Activated B cell treated with CpG ODN at 0.5 μM for 24 hours (primary cell): ENCODE measurements at regions of chr9 and their contacts with region 1.

Region 1: DNA sequence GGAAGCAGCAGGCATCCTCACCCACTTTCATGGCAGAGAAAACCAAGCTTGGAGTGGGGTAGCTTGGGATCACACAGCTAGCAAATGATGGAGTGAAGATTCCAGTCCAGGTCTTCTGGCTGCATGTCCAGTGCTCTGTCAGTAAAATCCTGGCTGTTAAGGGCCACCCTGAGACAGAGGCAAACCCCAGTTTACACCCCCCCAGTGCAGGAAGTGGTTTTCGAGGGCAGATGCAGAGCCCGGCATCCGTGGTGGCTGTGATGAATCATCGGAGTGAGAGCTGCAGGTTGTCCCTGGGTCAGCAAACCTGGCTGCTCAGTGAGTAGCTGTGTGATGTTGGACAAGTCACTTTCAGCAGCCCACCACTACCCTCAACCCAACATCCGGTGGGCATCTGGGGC is 115.4 kb downstream of the RGS3 start:
- DNase-seq: peak; percentile 68
- ATAC-seq: peak; percentile 48
- H3K4me3 Mint-ChIP-seq: peak overlapping the region; percentile 53
- H3K27ac Mint-ChIP-seq: peak overlapping the region; percentile 94
- H3K4me1 Mint-ChIP-seq: peaks cover 79% of the 10 kb centered on the region
- H3K27me3 Mint-ChIP-seq: no peaks in the 10 kb centered on the region
- CTCF ChIP-seq: no peak

Region 2: GRCh38 chr9:113221003-113221799 is 357.7 kb before region 1 on chr9 and contains the starts of genes FKBP15 and SLC31A1:
- CTCF ChIA-PET with region 1: interaction called, 3 read pairs
- POLR2A ChIA-PET with region 1: no interaction called
- intact Hi-C with region 1: loop called (anchors 1 kb)
- DNase-seq: peak; percentile 94
- ATAC-seq: peak; percentile 95
- H3K4me3 Mint-ChIP-seq: peak within 1 kb of the TSS; percentile 96
- H3K27ac Mint-ChIP-seq: peak within 1 kb of the TSS; percentile 94
- H3K4me1 Mint-ChIP-seq: peaks cover 49% of the 10 kb centered on the region
- H3K27me3 Mint-ChIP-seq: no peaks in the 10 kb centered on the region
- CTCF ChIP-seq: no peak
- total RNA-seq, gene FKBP15: 48.3 and 49.1 TPM in 2 replicates
- total RNA-seq, gene SLC31A1: 5.7 and 7.3 TPM in 2 replicates

Region 3: GRCh38 chr9:113376634-113377567 is 202.0 kb before region 1 on chr9 and contains the start of gene HDHD3:
- CTCF ChIA-PET with region 1: no interaction called
- POLR2A ChIA-PET with region 1: interaction called, 7 read pairs
- intact Hi-C with region 1: loop called (anchors 1 kb)
- DNase-seq: peak; percentile 78
- ATAC-seq: peak; percentile 90
- H3K4me3 Mint-ChIP-seq: peak within 1 kb of the TSS; percentile 92
- H3K27ac Mint-ChIP-seq: peak within 1 kb of the TSS; percentile 81
- H3K4me1 Mint-ChIP-seq: peaks cover 32% of the 10 kb centered on the region
- H3K27me3 Mint-ChIP-seq: no peaks in the 10 kb centered on the region
- CTCF ChIP-seq: no peak
- total RNA-seq, gene HDHD3: 23.4 and 23.9 TPM in 2 replicates

Region 4: DNA sequence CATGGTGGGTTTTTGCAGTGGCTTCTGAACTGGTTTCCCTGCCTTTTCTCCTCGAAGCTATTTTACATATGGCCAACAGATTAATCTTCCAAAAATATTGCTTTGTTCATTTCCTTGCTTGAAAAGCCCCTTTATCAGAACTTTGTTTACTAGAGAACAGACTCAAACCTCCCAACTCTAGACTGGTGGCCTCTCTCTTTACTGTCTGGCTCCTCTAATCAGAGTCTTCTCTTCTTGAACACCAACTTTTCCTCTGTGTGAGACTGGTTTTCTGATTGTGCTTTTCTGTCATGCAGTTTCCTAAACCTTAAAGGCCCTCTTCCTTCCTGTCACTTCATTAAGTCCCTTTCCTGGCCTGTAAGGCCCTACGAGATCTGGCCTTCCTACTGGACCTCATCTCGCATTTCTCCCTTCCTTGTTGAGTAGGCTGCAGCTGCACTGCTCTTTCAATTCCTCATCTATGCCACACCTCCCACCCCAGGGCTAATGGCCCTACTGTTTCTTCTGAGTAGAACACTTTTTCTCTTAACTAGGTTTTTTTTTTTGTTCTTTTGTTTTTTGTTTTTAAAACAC is 162.6 kb before region 1 on chr9:
- CTCF ChIA-PET with region 1: interaction called, 3 read pairs
- POLR2A ChIA-PET with region 1: interaction called, 83 read pairs
- intact Hi-C with region 1: loop called (anchors 1 kb)
- DNase-seq: no peak
- ATAC-seq: peak; percentile 99
- H3K4me3 Mint-ChIP-seq: no peak overlapping the region
- H3K27ac Mint-ChIP-seq: no peak overlapping the region
- H3K4me1 Mint-ChIP-seq: peaks cover 4% of the 10 kb centered on the region
- H3K27me3 Mint-ChIP-seq: no peaks in the 10 kb centered on the region
- CTCF ChIP-seq: no peak

Region 5: DNA sequence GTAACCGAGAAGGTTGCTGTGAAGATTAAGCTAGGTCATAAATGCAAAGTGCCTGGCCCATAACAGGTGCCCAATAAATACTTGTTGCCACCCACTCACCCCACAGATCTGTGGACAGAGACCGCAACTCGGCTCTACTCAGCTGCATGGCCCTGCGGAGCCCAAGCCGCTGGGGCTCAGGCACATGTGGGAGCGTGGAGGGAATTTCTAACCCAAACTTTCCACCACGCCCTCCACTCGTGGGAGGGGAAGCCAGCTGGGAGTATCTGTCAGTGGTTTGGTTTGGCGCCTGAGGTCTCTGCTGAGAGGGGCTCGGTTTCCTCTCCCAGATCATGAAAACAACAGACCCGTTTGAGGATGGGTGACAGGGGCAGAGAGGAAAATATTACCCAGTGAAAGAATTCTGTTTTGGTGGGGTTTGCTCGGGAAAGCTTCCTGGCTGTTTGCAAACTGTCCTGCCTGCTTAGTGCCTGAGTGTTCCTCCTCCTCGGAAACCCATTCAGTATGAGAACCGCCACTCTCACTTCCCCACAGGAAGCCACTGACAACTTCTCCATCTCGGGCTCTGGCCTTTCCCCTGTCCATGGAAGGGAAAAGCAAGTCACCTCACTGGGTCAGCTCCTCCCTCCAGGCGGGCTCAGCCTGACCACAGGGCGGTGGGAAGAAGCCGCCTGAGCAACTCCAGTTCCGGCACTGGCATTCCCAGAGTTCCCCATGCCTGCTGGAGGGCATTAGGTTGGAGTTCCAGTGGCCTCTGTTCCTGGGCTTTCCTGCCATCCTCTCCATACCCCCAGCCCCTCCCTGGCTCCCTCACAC is 55.3 kb before region 1 on chr9:
- CTCF ChIA-PET with region 1: interaction called, 4 read pairs
- POLR2A ChIA-PET with region 1: interaction called, 17 read pairs
- intact Hi-C with region 1: loop called (anchors 1 kb)
- DNase-seq: peak; percentile 34
- ATAC-seq: peak; percentile 90
- H3K4me3 Mint-ChIP-seq: peak overlapping the region; percentile 59
- H3K27ac Mint-ChIP-seq: peak overlapping the region; percentile 71
- H3K4me1 Mint-ChIP-seq: peaks cover 26% of the 10 kb centered on the region
- H3K27me3 Mint-ChIP-seq: no peaks in the 10 kb centered on the region
- CTCF ChIP-seq: no peak

Region 6: GRCh38 chr9:113622600-113623400 is 43.9 kb after region 1 on chr9:
- CTCF ChIA-PET with region 1: interaction called, 4 read pairs
- POLR2A ChIA-PET with region 1: interaction called, 13 read pairs
- intact Hi-C with region 1: loop called (anchors 2 kb)
- DNase-seq: peak; percentile 57
- ATAC-seq: peak; percentile 90
- H3K4me3 Mint-ChIP-seq: peak overlapping the region; percentile 58
- H3K27ac Mint-ChIP-seq: peak overlapping the region; percentile 67
- H3K4me1 Mint-ChIP-seq: peaks cover 44% of the 10 kb centered on the region
- H3K27me3 Mint-ChIP-seq: no peaks in the 10 kb centered on the region
- CTCF ChIP-seq: no peak